Endothelial cell of umbilical vein (primary cell): ENCODE measurements at regions of chr10 and their contacts with region 1.

Region 1: GRCh38 chr10:96395931-96396877 is 37.4 kb upstream of the OPALIN start:
- DNase-seq: peak; percentile 64
- H3K4me3 ChIP-seq: no peak overlapping the region
- H3K27ac ChIP-seq: no peak overlapping the region
- H3K4me1 ChIP-seq: no peaks in the 10 kb centered on the region
- H3K27me3 ChIP-seq: peaks cover 4 to 9% of the 10 kb centered on the region in 2 experiments
- CTCF ChIP-seq: peak; percentile 76 to 86
- POLR2A ChIP-seq: no peak

Region 2: DNA sequence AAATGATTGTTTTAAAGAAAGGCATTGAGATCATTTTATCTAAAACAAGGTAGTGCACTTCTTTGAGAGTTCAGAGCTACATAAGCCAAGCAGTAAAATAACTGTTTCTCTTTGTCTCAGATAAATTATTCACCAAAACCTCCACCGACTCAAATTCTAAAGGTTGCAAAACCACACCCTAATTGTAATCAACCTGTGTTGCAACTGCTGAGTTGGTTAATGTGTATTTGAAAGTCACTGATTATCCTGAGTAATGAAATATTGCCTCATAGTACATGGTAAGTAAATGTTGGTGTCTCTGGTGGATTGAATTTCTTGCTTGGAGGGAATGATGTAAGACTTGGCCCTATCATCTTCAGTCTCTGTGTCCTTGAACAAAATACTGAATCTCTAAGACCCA is 1493.6 kb before region 1 on chr10:
- CTCF ChIA-PET with region 1: no interaction called
- POLR2A ChIA-PET with region 1: no interaction called
- dilution Hi-C with region 1: no loop called
- intact Hi-C with region 1: no loop called
- DNase-seq: no peak
- H3K4me3 ChIP-seq: no peak overlapping the region
- H3K27ac ChIP-seq: no peak overlapping the region
- H3K4me1 ChIP-seq: no peaks in the 10 kb centered on the region
- H3K27me3 ChIP-seq: no peaks in the 10 kb centered on the region
- CTCF ChIP-seq: no peak
- POLR2A ChIP-seq: no peak

Region 3: GRCh38 chr10:96556003-96556402 is 159.8 kb after region 1 on chr10:
- CTCF ChIA-PET with region 1: interaction called, 3 read pairs
- POLR2A ChIA-PET with region 1: no interaction called
- dilution Hi-C with region 1: no loop called
- intact Hi-C with region 1: loop called (anchors 2 kb)
- DNase-seq: peak; percentile 24
- H3K4me3 ChIP-seq: no peak overlapping the region
- H3K27ac ChIP-seq: no peak overlapping the region
- H3K4me1 ChIP-seq: no peaks in the 10 kb centered on the region
- H3K27me3 ChIP-seq: no peaks in the 10 kb centered on the region
- CTCF ChIP-seq: peak; percentile 10 to 20
- POLR2A ChIP-seq: no peak

Region 4: DNA sequence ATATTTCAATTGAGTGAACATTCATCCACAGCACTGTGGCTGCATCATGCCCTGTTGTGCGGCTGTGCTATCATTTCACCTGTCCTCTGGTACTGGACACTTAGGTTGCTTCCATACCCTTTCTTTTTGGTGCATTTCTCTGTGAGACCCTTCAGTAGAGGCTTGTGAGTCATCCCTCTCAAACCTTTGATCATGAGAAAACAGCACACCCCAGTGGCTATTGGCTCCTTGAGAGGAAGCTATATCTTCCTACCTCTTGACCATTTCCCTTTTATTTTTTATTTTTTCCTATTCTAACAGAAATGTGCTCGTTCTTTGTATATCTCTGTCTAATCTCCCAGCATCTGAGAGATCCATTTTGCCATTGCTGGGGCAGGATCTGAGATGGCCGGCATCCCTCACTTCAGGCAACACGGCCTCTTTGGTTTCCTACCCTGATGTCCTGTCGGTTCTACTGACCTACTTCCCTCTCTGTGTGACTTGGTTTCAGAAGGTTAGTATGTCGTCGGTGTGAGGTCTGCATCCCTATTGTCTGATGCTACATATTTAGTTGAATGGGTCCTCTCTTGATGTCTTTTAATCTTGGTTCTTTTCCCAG is 347.9 kb after region 1 on chr10:
- CTCF ChIA-PET with region 1: interaction called, 4 read pairs
- POLR2A ChIA-PET with region 1: no interaction called
- dilution Hi-C with region 1: no loop called
- intact Hi-C with region 1: loop called (anchors 5 kb)
- DNase-seq: no peak
- H3K4me3 ChIP-seq: no peak overlapping the region
- H3K27ac ChIP-seq: no peak overlapping the region
- H3K4me1 ChIP-seq: no peaks in the 10 kb centered on the region
- H3K27me3 ChIP-seq: no peaks in the 10 kb centered on the region
- CTCF ChIP-seq: peak in 1 of 2 donors; percentile 3
- POLR2A ChIP-seq: no peak